ENCODE measurements at regions of chr2 and their contacts with region 1.

Region 1: DNA sequence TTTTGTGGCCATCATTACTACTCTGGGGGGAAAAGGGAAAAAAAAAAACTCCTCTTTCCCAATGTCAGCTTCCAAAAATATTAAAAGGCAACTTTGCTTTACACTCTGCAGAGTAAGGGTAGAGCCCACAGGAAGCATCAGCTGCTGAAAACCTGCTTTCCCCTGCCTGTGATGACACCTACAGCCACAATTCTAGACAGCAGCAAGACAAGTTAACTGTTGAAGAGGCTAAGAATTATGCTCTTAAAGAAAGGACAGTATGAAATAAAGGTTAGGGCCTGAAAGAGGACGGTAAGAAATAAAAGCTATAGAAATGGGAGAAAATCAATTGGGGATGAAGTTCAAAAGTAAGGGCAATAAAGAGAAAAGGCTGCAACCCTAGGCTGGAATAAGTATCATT is 3.0 kb downstream of the PDE11A start:
- DNase-seq: peak in 1 of 2 experiments; percentile 58
- ATAC-seq: no peak
- H3K4me3 ChIP-seq: no peak overlapping the region
- H3K27ac ChIP-seq: 0 out of 6 replicates have a peak overlapping the region, but pooled peaks of 1 of the 2 experiments have one; percentile 58
- H3K4me1 ChIP-seq: peaks cover 35% of the 10 kb centered on the region; the same call in 2 of the 3 replicates
- CTCF ChIP-seq: peak; percentile 28; the same call in 2 of the 3 replicates
- EP300 ChIP-seq: no peak
- POLR2A ChIP-seq: no peak
- RAD21 ChIP-seq: peak; percentile 45 to 59

Region 2: GRCh38 chr2:177983183-177983788 is 86.3 kb before region 1 on chr2:
- CTCF ChIA-PET with region 1: interaction called, 23 read pairs
- POLR2A ChIA-PET with region 1: no interaction called
- DNase-seq: peak; percentile 48 to 71
- ATAC-seq: peak; percentile 80 to 92
- H3K4me3 ChIP-seq: no peak overlapping the region
- H3K27ac ChIP-seq: no peak overlapping the region
- H3K4me1 ChIP-seq: peaks cover 13% of the 10 kb centered on the region
- CTCF ChIP-seq: peak; percentile 78
- EP300 ChIP-seq: no peak
- POLR2A ChIP-seq: no peak
- RAD21 ChIP-seq: peak; percentile 73 to 79

Measured in A549 (cell line).